Psoas muscle (tissue), 8 donors: ENCODE measurements at regions of chr7 and their contacts with region 1.

Region 1: GRCh38 chr7:142508258-142508689 is 241.0 kb upstream of the PRSS1 start:
- DNase-seq: no peak
- ATAC-seq: peak; percentile 47 to 78 (median 70)
- H3K4me3 ChIP-seq: no peak overlapping the region
- H3K27ac ChIP-seq: no peak overlapping the region
- H3K4me1 ChIP-seq: no peaks in the 10 kb centered on the region
- H3K27me3 ChIP-seq: no peaks in the 10 kb centered on the region
- CTCF ChIP-seq: no peak

Region 2: GRCh38 chr7:142125256-142125955 is 382.9 kb before region 1 on chr7:
- intact Hi-C with region 1: no loop called
- DNase-seq: no peak
- ATAC-seq: no peak
- H3K4me3 ChIP-seq: no peak overlapping the region
- H3K27ac ChIP-seq: no peak overlapping the region
- H3K4me1 ChIP-seq: no peaks in the 10 kb centered on the region
- H3K27me3 ChIP-seq: no peaks in the 10 kb centered on the region
- CTCF ChIP-seq: no peak

Region 3: GRCh38 chr7:142471820-142472219 is 36.5 kb before region 1 on chr7:
- intact Hi-C with region 1: loop called in 1 of 2 experiments (anchors 2 kb)
- DNase-seq: no peak
- ATAC-seq: no peak
- H3K4me3 ChIP-seq: no peak overlapping the region
- H3K27ac ChIP-seq: no peak overlapping the region
- H3K4me1 ChIP-seq: no peaks in the 10 kb centered on the region
- H3K27me3 ChIP-seq: no peaks in the 10 kb centered on the region
- CTCF ChIP-seq: no peak